ENCODE measurements at regions of chr2 and their contacts with region 1.

Region 1: DNA sequence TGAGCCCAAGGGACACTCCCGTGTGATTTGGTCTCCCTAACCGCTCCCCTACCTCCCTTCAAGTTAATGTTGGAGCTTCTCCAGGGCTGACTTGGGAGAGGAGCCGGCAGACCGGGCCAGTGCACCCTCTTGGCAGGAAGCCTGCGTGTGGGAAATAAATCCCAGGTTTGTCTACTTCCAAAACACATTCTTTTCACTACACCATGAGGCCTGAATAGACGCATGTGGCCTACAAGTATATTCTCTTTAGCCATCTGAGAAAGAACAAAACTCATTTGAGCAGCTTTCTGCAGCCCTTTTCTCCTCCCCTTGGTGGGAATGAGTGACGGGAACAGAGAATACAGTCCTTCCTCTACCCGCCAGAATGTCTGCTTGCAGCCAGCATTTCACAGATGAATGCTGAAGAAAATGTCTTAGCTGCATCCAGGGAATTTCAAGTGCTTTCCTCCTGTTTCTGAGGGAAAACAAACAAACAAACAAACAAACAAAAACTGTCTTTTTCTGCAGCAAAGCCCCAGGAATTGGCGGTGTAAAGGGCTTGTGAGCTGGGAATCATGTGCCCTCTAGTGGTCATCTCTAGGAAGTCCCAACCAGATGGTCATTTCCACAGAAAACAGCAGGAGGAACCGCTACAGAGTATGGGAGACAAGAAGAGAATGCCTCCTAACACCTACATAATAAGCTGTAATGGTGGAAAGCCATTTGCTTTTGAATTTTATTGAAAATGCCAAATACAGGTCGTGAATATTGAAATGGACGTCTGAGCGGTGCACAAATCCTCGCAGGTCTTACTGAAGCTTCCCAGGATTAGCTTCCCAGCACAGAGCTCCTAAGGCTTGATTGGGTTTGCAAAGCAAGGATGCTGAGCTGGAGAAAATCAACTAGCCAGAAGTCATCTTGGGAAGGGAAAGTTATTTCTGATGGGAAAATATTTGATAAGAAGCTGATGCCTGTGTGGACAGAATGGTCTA is 41.2 kb upstream of the DAPL1 start:
- DNase-seq: no peak
- ATAC-seq: peak; percentile 95
- H3K4me3 ChIP-seq: no peak overlapping the region
- H3K27ac ChIP-seq: no peak overlapping the region
- H3K4me1 ChIP-seq: no peaks in the 10 kb centered on the region
- H3K27me3 ChIP-seq: no peaks in the 10 kb centered on the region
- CTCF ChIP-seq: peak; percentile 84 to 91 (median 85)
- EP300 ChIP-seq: no peak
- POLR2A ChIP-seq: no peak
- RAD21 ChIP-seq: peak; percentile 78

Region 2: GRCh38 chr2:157492189-157492773 is 1261.6 kb before region 1 on chr2:
- CTCF ChIA-PET with region 1: no interaction called
- POLR2A ChIA-PET with region 1: no interaction called
- RAD21 ChIA-PET with region 1: no interaction called
- SMC1A ChIA-PET with region 1: no interaction called
- in situ Hi-C with region 1: no loop called
- intact Hi-C with region 1: loop called (anchors 10 kb)
- DNase-seq: peak; percentile 43
- ATAC-seq: peak; percentile 98
- H3K4me3 ChIP-seq: no peak overlapping the region
- H3K27ac ChIP-seq: no peak overlapping the region
- H3K4me1 ChIP-seq: no peaks in the 10 kb centered on the region
- H3K27me3 ChIP-seq: no peaks in the 10 kb centered on the region
- CTCF ChIP-seq: peak; percentile 79 to 93 (median 82); a peak in 5 of 6 replicates
- EP300 ChIP-seq: no peak
- POLR2A ChIP-seq: no peak
- RAD21 ChIP-seq: peak; percentile 89

Region 3: DNA sequence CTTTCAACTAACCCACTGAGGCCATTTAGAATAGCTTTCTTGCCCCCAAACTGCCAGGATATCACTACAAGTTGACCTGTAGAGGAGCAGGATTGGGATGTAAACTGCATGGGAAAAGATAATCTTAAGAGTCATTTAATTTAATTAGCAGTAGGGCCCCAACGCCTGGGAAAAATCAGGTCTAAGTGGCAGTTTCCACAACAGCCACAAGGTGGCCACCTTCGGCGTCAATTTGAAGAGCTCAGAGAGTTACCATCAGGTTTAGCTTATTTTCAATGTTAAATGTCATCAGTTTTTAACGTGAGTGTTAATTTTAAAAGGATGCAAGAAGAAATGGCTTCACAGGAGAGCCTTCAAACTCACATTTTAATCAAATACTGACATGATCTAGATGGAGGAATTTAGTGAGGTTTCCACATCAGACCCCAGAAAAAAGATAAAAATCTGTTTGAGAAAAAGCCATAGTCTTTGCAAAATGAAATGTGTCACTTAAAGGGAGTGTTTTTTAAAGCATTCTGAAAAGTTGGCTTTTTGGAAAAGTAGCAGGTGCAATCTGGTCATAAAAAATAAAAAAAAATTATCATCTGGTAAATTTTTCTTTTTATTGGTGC is 729.5 kb before region 1 on chr2:
- CTCF ChIA-PET with region 1: interaction called, 92 read pairs
- POLR2A ChIA-PET with region 1: interaction called, 3 read pairs
- RAD21 ChIA-PET with region 1: interaction called, 32 read pairs
- SMC1A ChIA-PET with region 1: interaction called, 45 read pairs
- in situ Hi-C with region 1: no loop called
- intact Hi-C with region 1: loop called (anchors 1 kb)
- DNase-seq: no peak
- ATAC-seq: peak; percentile 86
- H3K4me3 ChIP-seq: no peak overlapping the region
- H3K27ac ChIP-seq: no peak overlapping the region
- H3K4me1 ChIP-seq: no peaks in the 10 kb centered on the region
- H3K27me3 ChIP-seq: no peaks in the 10 kb centered on the region
- CTCF ChIP-seq: peak; percentile 74 to 76 (median 75)
- EP300 ChIP-seq: no peak
- POLR2A ChIP-seq: no peak
- RAD21 ChIP-seq: peak; percentile 75

Region 4: DNA sequence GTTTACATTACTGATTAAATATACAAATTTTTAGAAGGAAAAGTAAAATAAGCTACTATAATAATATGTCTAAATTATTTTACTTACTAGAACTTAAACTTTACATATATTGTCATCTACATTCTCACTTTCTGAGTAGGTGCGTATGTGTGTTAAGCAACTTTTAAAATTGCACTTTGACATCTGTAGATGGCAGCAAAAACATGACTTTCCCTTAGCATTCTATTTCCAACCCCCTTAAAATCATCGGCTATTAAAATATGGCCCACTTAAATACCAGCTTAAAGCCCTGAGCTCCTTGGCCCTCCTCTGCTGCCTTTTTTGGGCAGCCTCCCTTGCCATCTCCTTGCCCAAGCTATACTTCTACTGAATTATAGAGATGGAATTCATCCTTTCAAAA is 574.3 kb before region 1 on chr2:
- CTCF ChIA-PET with region 1: interaction called, 32 read pairs
- POLR2A ChIA-PET with region 1: no interaction called
- RAD21 ChIA-PET with region 1: interaction called, 12 read pairs
- SMC1A ChIA-PET with region 1: interaction called, 7 read pairs
- in situ Hi-C with region 1: loop called (anchors 5 kb)
- intact Hi-C with region 1: loop called (anchors 1 kb)
- DNase-seq: no peak
- ATAC-seq: peak; percentile 65
- H3K4me3 ChIP-seq: no peak overlapping the region
- H3K27ac ChIP-seq: no peak overlapping the region
- H3K4me1 ChIP-seq: no peaks in the 10 kb centered on the region
- H3K27me3 ChIP-seq: no peaks in the 10 kb centered on the region; a peak in 1 of 4 replicates
- CTCF ChIP-seq: peak; percentile 14 to 46 (median 37); a peak in 5 of 6 replicates
- EP300 ChIP-seq: no peak
- POLR2A ChIP-seq: no peak
- RAD21 ChIP-seq: peak; percentile 69

Region 5: GRCh38 chr2:158735820-158736580 is 17.9 kb before region 1 on chr2:
- CTCF ChIA-PET with region 1: interaction called, 16 read pairs
- POLR2A ChIA-PET with region 1: no interaction called
- RAD21 ChIA-PET with region 1: no interaction called
- SMC1A ChIA-PET with region 1: interaction called, 4 read pairs
- in situ Hi-C with region 1: no loop called
- intact Hi-C with region 1: no loop called
- DNase-seq: no peak
- ATAC-seq: no peak
- H3K4me3 ChIP-seq: no peak overlapping the region
- H3K27ac ChIP-seq: no peak overlapping the region
- H3K4me1 ChIP-seq: no peaks in the 10 kb centered on the region
- H3K27me3 ChIP-seq: peaks cover 2% of the 10 kb centered on the region in 2 experiments; a peak in 3 of 4 replicates
- CTCF ChIP-seq: no peak
- EP300 ChIP-seq: no peak
- POLR2A ChIP-seq: no peak
- RAD21 ChIP-seq: no peak

Measured in GM12878 (cell line).